Pancreas (tissue), 10 donors: ENCODE measurements at regions of chr2 and their contacts with region 1.

Region 1: DNA sequence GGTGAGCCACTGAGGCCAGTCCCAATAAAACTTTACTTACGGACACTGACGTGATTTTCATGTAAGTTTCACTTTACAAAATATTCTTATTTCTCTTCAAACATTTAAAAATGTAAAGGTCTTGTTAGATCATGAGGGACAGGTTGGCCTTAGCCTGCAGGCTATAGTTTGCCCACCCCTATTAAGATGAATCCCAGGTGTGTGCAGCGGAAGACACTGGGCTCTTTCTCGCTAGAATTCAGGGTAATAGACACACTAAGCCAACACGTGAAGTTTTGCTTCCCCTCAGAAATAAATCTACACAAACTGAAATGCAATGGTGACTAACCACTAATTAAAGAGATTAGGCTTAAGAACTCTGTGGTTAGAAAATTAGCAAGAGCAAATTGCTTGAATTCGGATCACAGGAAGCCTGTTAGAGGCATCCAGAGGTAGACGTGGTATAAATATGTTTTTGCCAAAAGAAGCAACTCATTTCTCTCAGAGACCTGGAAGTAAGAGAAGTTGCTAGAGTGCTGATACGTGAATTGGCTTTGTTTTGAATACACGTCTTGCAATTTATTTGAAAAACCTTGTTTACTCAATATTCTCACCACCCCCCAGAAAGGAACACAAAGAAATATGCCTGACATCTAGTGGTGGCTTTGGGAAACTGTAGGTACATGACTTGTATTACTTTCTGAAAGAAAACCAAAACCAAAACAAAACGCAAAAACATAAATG is 151.6 kb downstream of the DTNB start:
- DNase-seq: peak in 3 of 6 donors; percentile 24 to 32 (median 31)
- ATAC-seq: peak; percentile 87 to 98 (median 96)
- H3K4me3 ChIP-seq: peak overlapping the region in 2 of 4 donors; percentile 15 to 22
- H3K27ac ChIP-seq: no peak overlapping the region
- H3K4me1 ChIP-seq: peaks cover 0 to 5% (median 0%) of the 10 kb centered on the region in 3 donors
- H3K27me3 ChIP-seq: no peaks in the 10 kb centered on the region
- CTCF ChIP-seq: peak; percentile 43 to 69 (median 58)

Region 2: DNA sequence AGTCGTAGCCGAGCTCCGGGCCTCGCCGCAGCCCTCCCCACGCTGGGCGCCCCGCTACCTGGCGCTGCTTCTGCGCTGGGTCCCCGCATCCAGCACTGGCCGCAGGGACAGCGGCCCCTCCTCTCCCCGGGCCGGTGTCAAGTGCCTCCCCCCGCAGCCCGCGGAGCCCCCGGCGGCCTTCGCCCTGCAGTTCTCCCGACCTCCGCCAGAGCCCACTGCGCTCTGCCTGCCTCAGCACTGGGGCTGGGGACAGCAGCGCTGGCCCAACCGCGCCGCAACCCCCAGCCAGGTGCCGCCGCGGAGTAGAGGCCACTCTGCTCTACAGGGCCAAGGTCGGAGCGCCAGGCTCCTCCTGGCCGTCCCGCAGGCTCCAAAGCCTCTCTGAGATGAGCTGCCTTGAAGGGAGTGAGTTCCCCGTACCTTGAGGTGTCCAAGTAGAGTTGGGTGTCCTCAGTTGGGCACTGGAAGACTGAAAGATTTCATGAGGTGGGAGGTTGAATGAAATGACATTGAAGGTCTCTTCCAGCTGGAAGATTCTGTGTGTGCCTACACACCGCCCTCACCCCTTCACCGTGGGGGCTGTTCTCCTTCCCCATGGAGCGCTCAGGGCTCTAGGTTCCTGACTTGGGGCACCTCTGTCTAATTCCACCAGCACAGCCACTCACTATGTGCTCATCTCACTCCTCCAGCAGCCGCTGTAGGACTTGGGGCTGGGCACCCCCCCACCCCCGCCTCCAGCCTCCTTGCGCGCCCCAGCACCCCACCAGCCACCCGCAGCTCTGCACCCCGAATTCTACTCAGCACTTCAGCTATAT is 179.2 kb before region 1 on chr2:
- intact Hi-C with region 1: loop called in 1 of 3 experiments (anchors 10 kb)
- DNase-seq: peak; percentile 81 to 95 (median 87)
- ATAC-seq: peak; percentile 83 to 93 (median 90)
- H3K4me3 ChIP-seq: peak overlapping the region; percentile 44 to 90 (median 72)
- H3K27ac ChIP-seq: peak overlapping the region; percentile 45 to 76 (median 62)
- H3K4me1 ChIP-seq: no peaks in the 10 kb centered on the region
- H3K27me3 ChIP-seq: no peaks in the 10 kb centered on the region
- CTCF ChIP-seq: peak; percentile 96 to 99 (median 98)

Region 3: DNA sequence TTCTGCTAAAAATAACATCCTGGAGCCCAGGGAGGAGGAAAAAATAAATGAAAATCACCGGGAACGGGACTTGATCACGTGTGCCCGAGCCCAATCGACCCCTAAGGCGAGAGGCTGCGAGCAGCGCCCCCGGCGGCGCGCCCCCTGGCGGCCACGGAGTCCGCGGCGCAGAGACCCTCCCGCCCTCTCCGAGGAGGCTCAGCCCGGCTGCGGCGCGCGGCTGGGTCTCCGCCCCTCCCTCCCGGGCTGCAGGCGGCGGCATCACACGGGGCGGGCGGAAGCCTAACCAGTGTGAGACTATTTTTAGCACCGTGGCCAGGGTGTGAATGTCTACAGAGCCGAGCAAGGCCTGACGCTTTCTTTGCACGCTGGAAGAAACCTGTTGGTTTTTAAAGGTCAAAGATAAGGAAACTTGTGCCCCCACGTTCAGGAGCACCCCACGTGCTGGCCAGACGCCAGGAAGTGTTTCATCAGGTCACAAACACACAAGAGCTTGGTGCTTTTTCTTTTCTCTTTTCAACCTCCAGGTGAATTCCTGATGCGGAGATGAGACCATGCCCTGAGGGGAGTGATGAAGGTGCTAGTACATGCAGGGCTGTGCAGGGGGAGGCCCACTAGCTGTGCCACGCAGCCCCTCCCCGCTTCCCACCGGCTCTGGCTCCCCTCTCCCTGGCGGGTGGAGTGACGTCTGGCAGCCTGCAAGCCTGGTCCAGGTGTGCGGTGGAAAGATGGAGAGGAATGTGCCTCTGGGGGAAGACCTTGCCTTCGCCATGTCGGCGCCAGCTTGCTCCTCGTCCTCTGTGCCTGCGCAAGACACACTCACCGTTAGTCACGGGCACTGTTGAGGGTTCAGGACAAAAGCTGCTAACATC is 144.8 kb before region 1 on chr2:
- intact Hi-C with region 1: loop called in 1 of 3 experiments (anchors 10 kb)
- DNase-seq: peak; percentile 87 to 95 (median 91)
- ATAC-seq: peak; percentile 87 to 94 (median 90)
- H3K4me3 ChIP-seq: peak overlapping the region in 1 of 4 donors; percentile 24
- H3K27ac ChIP-seq: peak overlapping the region in 2 of 4 donors; percentile 45 to 59
- H3K4me1 ChIP-seq: peaks cover 5 to 11% (median 5%) of the 10 kb centered on the region in 3 donors
- H3K27me3 ChIP-seq: no peaks in the 10 kb centered on the region
- CTCF ChIP-seq: peak; percentile 94 to 99 (median 98)

Region 4: DNA sequence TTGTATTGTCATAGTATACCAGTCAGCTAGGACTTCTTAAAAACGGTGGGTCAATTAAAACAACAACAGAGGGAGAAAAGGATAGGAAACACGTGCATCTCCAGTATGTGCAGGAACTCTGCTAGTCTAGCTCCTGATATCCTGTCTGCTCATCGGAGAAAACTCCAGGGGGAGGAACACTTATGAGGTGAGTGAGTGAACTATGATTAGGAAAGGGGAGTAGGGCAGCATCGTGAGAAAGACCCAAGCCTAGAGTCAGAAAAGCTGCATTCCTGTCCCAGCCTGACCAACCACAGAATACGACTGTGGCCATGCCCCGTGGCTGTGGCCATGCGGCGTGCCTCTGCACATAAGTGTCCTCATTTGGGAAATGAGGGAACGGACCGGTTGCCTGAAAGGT is 117.3 kb after region 1 on chr2:
- intact Hi-C with region 1: no loop called
- DNase-seq: no peak
- ATAC-seq: no peak
- H3K4me3 ChIP-seq: no peak overlapping the region
- H3K27ac ChIP-seq: no peak overlapping the region
- H3K4me1 ChIP-seq: no peaks in the 10 kb centered on the region
- H3K27me3 ChIP-seq: no peaks in the 10 kb centered on the region
- CTCF ChIP-seq: no peak